ENCODE measurements at regions of chr15 and their contacts with region 1.

Region 1: DNA sequence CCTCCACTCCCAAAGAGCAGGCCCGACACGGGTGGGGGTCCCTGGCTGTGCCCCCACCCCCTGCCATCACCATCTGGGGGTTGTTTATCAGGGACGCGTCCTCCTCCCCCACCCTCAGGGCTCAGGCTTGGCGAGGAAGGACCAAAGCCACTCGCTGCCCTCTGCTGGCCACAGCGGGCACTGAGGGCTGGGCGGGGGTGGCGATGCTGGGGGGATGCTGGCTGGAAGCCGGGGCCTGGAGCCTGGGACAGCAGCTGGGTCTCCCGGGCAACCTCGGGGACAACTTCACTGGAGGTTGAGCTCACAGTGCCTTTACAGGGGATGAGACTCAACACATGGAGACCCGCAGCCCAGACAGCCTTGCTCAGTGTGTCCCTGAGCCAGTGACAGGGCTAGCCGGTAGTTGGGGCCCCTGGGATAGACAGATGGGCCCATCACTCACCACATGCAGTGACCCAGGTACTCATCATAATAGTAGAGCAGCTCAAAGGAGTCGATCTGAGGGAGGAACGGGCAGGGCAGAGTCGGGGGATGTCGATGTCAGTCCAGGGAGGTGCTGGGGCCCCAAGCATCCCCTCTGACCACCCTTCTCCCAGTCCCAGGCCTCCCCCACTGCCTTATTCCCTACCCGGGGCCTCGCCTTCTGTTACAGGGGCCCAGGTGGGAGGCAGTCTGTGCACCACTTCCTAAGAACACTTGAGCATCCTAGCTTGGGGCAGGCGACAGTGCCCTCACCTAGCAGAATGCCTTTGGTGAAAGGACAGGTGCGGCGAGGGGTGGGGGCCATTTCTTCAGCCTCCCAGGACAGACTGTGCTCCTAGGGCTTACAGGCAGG is 5.9 kb upstream of the CALML4 start:
- DNase-seq: peak; percentile 73
- H3K4me3 ChIP-seq: no peak overlapping the region
- H3K27ac ChIP-seq: peak overlapping the region; percentile 85
- H3K4me1 ChIP-seq: peaks cover 60% of the 10 kb centered on the region
- CTCF ChIP-seq: peak; percentile 80

Region 2: GRCh38 chr15:67853454-67853853 is 357.6 kb before region 1 on chr15:
- CTCF ChIA-PET with region 1: no interaction called
- POLR2A ChIA-PET with region 1: no interaction called
- intact Hi-C with region 1: no loop called
- DNase-seq: peak; percentile 67
- H3K4me3 ChIP-seq: peak overlapping the region; percentile 58
- H3K27ac ChIP-seq: peak overlapping the region; percentile 75
- H3K4me1 ChIP-seq: peaks cover 86% of the 10 kb centered on the region
- CTCF ChIP-seq: 0 out of 2 replicates have a peak, but pooled peaks have one; percentile 11

Region 3: GRCh38 chr15:67863442-67863987 is 347.5 kb before region 1 on chr15:
- CTCF ChIA-PET with region 1: interaction called, 4 read pairs
- POLR2A ChIA-PET with region 1: no interaction called
- intact Hi-C with region 1: loop called (anchors 1 kb)
- DNase-seq: peak; percentile 89
- H3K4me3 ChIP-seq: peak overlapping the region; percentile 62
- H3K27ac ChIP-seq: peak overlapping the region; percentile 70
- H3K4me1 ChIP-seq: peaks cover 41% of the 10 kb centered on the region
- CTCF ChIP-seq: peak; percentile 89

Region 4: DNA sequence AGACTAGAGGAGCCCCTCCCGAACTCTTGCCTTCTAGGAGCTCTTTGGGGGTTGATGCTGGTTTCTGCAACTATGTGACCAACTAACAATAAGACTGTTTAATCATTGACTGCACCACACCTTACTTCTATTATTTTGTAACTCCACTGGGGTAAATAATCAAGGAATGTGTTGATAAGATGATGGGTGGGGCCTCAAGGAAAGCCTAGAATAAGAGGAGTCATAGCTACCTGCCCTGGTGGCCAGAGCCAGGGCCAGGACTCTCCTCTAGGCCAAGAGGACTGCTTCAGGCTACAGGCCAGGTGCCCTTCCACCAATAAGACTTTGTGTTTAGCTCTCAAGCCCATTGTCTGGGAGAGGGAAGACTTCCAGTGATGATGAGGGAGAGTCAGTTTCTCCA is 198.1 kb before region 1 on chr15:
- CTCF ChIA-PET with region 1: no interaction called
- POLR2A ChIA-PET with region 1: no interaction called
- intact Hi-C with region 1: no loop called
- DNase-seq: no peak
- H3K4me3 ChIP-seq: no peak overlapping the region
- H3K27ac ChIP-seq: no peak overlapping the region
- H3K4me1 ChIP-seq: no peaks in the 10 kb centered on the region
- CTCF ChIP-seq: no peak

Region 5: DNA sequence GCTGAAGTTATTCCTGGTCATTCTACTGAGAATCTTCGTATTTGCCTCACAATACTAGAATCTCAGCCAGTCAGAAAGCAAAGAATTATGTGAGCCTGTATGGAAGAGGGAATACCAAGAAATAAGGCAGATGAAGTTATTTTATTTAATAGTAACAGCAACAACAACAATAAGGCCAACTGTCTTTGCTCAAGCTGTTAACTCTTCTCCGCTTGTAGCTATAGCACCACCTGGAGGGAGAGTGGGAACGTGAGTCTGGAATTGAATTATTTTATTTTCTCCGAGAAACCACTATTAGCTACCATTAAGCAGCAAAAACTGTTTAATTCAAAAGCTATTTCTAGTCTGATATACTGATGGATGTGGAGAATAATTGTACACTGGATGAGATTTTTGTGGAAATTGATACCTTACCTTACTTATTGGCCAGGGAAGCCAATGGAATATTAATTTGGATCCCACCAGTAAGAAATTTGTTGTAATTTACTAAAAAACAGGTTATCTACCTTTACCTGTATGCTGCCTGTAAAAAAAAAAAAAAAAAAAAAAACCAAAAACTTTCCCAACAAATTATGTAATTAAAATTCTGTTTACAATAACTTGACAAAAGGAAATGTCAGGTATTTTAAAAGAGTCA is 56.0 kb before region 1 on chr15:
- CTCF ChIA-PET with region 1: no interaction called
- POLR2A ChIA-PET with region 1: no interaction called
- intact Hi-C with region 1: loop called (anchors 2 kb)
- DNase-seq: peak; percentile 72
- H3K4me3 ChIP-seq: no peak overlapping the region
- H3K27ac ChIP-seq: peak overlapping the region; percentile 16
- H3K4me1 ChIP-seq: peaks cover 8% of the 10 kb centered on the region
- CTCF ChIP-seq: peak; percentile 96

Region 6: GRCh38 chr15:68187559-68187958 is 23.5 kb before region 1 on chr15:
- CTCF ChIA-PET with region 1: no interaction called
- POLR2A ChIA-PET with region 1: no interaction called
- intact Hi-C with region 1: loop called (anchors 2 kb)
- DNase-seq: peak; percentile 49
- H3K4me3 ChIP-seq: no peak overlapping the region
- H3K27ac ChIP-seq: peak overlapping the region; percentile 97
- H3K4me1 ChIP-seq: peaks cover 70% of the 10 kb centered on the region
- CTCF ChIP-seq: no peak

Region 7: DNA sequence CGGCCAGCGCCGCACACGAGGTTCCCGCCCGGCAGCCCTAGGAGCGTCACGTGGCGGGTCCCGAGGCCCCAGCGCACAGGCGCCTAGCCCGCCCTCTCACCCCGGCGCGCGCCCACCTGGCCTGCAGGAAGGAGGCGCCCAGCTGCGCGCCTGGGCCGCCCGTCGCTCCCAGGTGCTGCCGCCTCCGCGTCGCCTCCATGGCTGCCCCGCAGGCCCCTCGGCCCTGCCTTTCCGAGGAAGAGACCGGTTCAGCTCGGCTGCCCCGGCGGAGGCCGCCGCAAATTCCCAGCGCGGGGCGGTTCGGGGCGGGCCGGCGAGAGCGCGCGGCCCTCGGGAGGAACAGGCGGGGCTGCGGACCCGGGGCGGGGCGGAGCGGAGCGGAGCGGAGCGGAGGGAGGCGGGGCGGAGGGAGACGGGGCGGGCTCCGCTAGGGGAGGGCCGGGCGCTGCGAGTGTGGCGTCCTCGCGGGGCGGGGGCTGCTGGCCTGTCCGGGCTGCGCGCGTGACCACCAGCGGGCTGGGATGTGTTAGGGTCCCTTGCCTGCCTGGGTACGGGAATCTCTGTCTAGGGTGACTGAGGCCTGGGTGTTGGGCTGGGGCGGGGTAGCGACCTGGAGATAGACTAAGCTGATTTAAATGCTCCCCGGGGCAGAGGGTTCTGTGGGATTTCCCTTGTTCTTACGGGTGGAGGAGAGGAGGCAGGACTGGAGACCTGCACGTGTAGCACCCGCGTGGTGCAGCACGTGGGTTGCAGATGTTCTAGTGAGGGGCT is 18.5 kb after region 1 on chr15 and contains the start of gene CLN6:
- CTCF ChIA-PET with region 1: no interaction called
- POLR2A ChIA-PET with region 1: interaction called, 8 read pairs
- intact Hi-C with region 1: loop called (anchors 1 kb)
- DNase-seq: peak; percentile 92
- H3K4me3 ChIP-seq: peak within 1 kb of the TSS; percentile 80
- H3K27ac ChIP-seq: peak within 1 kb of the TSS; percentile 80
- H3K4me1 ChIP-seq: peaks cover 49% of the 10 kb centered on the region
- CTCF ChIP-seq: no peak; the same call in 1 of the 2 replicates
- total RNA-seq, gene CLN6: 50.3 and 60.2 TPM in 2 replicates

Measured in OCI-LY7 (cell line).